CD4-positive, alpha-beta T cell (primary cell): ENCODE measurements at regions of chr1 and their contacts with region 1.

Region 1: DNA sequence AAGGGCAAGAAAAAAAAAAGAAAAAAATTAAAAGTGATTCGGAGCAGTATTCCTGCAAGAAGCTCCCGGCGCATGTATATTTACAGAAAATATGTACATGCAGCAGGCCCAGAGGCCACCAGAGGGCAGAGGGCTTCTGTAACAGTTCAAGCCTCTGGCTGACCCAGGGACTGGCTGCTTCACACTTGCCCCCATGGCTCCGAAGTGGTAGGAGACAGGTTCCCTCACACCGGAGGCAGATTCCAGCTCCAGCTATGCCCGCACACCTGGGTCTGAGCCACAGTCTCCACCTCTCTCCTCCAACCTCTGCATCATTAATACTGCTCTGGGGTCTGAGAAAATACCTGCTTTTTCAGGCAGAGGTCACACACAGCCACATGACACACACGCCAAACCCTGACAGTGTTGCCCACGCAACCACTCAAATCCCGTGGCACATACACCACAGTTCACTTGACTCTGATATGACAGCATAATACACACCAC is 2.2 kb upstream of the ARHGAP30 start:
- DNase-seq: peak in 13 of 14 experiments; percentile 29 to 78 (median 42)
- ATAC-seq: no peak
- H3K4me3 ChIP-seq: no peak overlapping the region
- H3K4me3 Mint-ChIP-seq: no peak overlapping the region
- H3K27ac ChIP-seq: no peak overlapping the region
- H3K27ac Mint-ChIP-seq: peak overlapping the region; percentile 90
- H3K4me1 ChIP-seq: peaks cover 45% of the 10 kb centered on the region
- H3K4me1 Mint-ChIP-seq: peaks cover 51% of the 10 kb centered on the region
- H3K27me3 ChIP-seq: no peaks in the 10 kb centered on the region
- H3K27me3 Mint-ChIP-seq: no peaks in the 10 kb centered on the region
- CTCF ChIP-seq: peak; percentile 59

Region 2: DNA sequence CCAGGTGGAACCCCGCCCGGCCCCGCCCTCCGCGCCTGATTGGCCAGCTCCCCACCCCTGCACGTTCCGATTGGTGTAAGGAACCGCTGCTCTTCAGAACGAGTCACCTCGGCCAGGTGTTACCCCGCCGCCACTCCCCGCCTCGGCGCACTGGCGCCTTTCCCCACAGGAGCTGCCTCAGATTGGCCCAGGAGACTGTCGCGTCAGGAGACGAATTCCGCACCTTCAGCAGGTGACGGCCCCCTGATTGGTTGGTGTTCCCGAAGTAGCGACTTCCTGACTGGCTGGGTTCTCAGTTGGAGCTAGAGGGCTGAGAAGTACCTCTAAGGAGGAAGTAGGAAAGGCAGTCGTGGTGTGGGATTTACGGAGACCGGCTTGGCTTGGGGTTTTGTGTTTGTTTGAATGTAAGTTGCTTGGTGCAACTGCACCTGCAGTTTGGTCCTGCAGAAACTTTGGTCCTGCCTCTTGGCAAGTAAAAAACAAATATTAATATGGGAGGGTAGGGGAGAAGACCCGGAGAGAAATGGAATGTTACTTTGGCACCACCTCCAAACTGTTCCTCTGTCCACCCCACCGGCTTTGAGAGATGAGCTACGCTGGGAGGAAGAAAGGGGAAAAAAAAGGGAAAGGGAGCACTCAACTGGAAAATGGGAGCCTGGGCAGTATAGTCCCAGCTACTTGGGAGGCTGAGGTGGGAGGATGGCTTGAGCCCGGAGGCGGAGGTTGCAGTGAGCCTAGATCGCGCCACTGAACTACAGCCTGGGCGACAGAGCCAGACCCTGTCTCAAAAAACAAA is 50.6 kb before region 1 on chr1:
- CTCF ChIA-PET with region 1: interaction called, 4 read pairs
- POLR2A ChIA-PET with region 1: interaction called, 31 read pairs
- intact Hi-C with region 1: no loop called
- DNase-seq: peak; percentile 79 to 96 (median 90)
- ATAC-seq: peak; percentile 95
- H3K4me3 ChIP-seq: peak overlapping the region; percentile 77
- H3K4me3 Mint-ChIP-seq: peak overlapping the region; percentile 91
- H3K27ac ChIP-seq: no peak overlapping the region
- H3K27ac Mint-ChIP-seq: peak overlapping the region; percentile 81
- H3K4me1 ChIP-seq: peaks cover 19% of the 10 kb centered on the region
- H3K4me1 Mint-ChIP-seq: peaks cover 25% of the 10 kb centered on the region
- H3K27me3 ChIP-seq: no peaks in the 10 kb centered on the region
- H3K27me3 Mint-ChIP-seq: no peaks in the 10 kb centered on the region
- CTCF ChIP-seq: no peak

Region 3: DNA sequence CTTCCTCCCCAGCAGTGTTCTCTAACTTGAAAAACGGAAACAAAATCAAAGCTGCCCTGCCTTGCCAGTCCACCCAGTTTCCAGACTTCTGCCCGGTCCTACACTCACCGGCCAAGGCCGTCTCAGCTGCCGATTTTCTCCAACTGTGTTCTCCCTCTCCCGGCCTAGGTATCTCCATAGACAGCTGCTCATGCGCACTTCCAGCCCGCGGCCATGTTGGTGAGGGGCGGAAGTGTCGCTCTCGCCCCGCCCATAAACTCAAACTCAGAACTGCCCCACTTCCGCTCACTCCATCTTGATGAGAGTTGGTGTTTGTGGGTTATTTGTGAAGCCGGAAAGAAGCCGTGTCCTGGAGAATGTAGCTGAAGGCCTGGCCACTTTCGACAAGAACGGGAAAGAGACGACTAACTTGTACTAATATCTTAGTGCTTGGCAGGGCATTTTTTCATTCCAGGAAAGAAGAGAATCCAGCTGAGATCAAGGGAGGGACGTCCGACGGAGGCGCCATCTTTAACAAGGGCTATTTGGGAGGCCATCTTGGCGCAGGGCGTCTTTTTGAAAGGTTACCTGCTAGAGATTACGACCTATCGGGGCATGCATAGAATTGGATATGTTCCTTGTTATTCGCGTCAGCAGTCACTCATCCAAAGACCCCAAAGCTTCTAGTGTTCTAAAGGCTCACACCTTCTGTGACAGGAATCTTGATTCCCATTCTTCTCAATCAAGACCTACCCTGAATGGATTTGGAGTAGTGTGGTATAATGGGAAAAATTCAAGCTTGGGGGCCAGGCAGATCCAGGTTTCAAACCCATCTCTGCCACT is 26.0 kb before region 1 on chr1 and contains the start of gene USF1:
- CTCF ChIA-PET with region 1: interaction called, 20 read pairs
- POLR2A ChIA-PET with region 1: interaction called, 295 read pairs
- intact Hi-C with region 1: loop called (anchors 1 kb)
- DNase-seq: peak; percentile 86 to 97 (median 92)
- ATAC-seq: peak; percentile 82
- H3K4me3 ChIP-seq: peak within 1 kb of the TSS; percentile 98
- H3K4me3 Mint-ChIP-seq: peak within 1 kb of the TSS; percentile 93
- H3K27ac ChIP-seq: peak within 1 kb of the TSS; percentile 90 to 96
- H3K27ac Mint-ChIP-seq: peak within 1 kb of the TSS; percentile 94
- H3K4me1 ChIP-seq: peaks cover 52% of the 10 kb centered on the region
- H3K4me1 Mint-ChIP-seq: peaks cover 43% of the 10 kb centered on the region
- H3K27me3 ChIP-seq: no peaks in the 10 kb centered on the region
- H3K27me3 Mint-ChIP-seq: no peaks in the 10 kb centered on the region
- CTCF ChIP-seq: no peak
- total RNA-seq, gene USF1: 93.5 to 99.1 TPM

Region 4: GRCh38 chr1:161091756-161092517 is 20.0 kb after region 1 on chr1:
- CTCF ChIA-PET with region 1: interaction called, 36 read pairs
- POLR2A ChIA-PET with region 1: interaction called, 79 read pairs
- intact Hi-C with region 1: loop called (anchors 1 to 2 kb)
- DNase-seq: no peak
- ATAC-seq: no peak
- H3K4me3 ChIP-seq: no peak overlapping the region
- H3K4me3 Mint-ChIP-seq: no peak overlapping the region
- H3K27ac ChIP-seq: no peak overlapping the region
- H3K27ac Mint-ChIP-seq: no peak overlapping the region
- H3K4me1 ChIP-seq: peaks cover 2% of the 10 kb centered on the region
- H3K4me1 Mint-ChIP-seq: peaks cover 12% of the 10 kb centered on the region
- H3K27me3 ChIP-seq: no peaks in the 10 kb centered on the region
- H3K27me3 Mint-ChIP-seq: no peaks in the 10 kb centered on the region
- CTCF ChIP-seq: no peak

Region 5: GRCh38 chr1:161117759-161118581 is 46.0 kb after region 1 on chr1 and contains the starts of genes NIT1 and PFDN2:
- CTCF ChIA-PET with region 1: interaction called, 3 read pairs
- POLR2A ChIA-PET with region 1: interaction called, 26 read pairs
- intact Hi-C with region 1: no loop called
- DNase-seq: peak; percentile 65 to 93 (median 78)
- ATAC-seq: peak; percentile 71
- H3K4me3 ChIP-seq: peak within 1 kb of the TSS; percentile 91
- H3K4me3 Mint-ChIP-seq: peak within 1 kb of the TSS; percentile 97
- H3K27ac ChIP-seq: peak within 1 kb of the TSS; percentile 81 to 91
- H3K27ac Mint-ChIP-seq: peak within 1 kb of the TSS; percentile 91
- H3K4me1 ChIP-seq: peaks cover 53% of the 10 kb centered on the region
- H3K4me1 Mint-ChIP-seq: peaks cover 67% of the 10 kb centered on the region
- H3K27me3 ChIP-seq: no peaks in the 10 kb centered on the region
- H3K27me3 Mint-ChIP-seq: no peaks in the 10 kb centered on the region
- CTCF ChIP-seq: no peak
- total RNA-seq, gene NIT1: 15.9 to 18.0 TPM
- total RNA-seq, gene PFDN2: 46.2 to 57.7 TPM

Region 6: GRCh38 chr1:161153679-161154426 is 81.9 kb after region 1 on chr1 and contains the start of gene UFC1:
- CTCF ChIA-PET with region 1: interaction called, 4 read pairs
- POLR2A ChIA-PET with region 1: interaction called, 14 read pairs
- intact Hi-C with region 1: loop called in 1 of 2 experiments (anchors 5 kb)
- DNase-seq: peak; percentile 67 to 96 (median 76)
- ATAC-seq: peak; percentile 91
- H3K4me3 ChIP-seq: peak within 1 kb of the TSS; percentile 97
- H3K4me3 Mint-ChIP-seq: peak within 1 kb of the TSS; percentile 98
- H3K27ac ChIP-seq: peak within 1 kb of the TSS; percentile 96 to 99
- H3K27ac Mint-ChIP-seq: peak within 1 kb of the TSS; percentile 99
- H3K4me1 ChIP-seq: peaks cover 19% of the 10 kb centered on the region
- H3K4me1 Mint-ChIP-seq: peaks cover 42% of the 10 kb centered on the region
- H3K27me3 ChIP-seq: no peaks in the 10 kb centered on the region
- H3K27me3 Mint-ChIP-seq: no peaks in the 10 kb centered on the region
- CTCF ChIP-seq: no peak
- total RNA-seq, gene UFC1: 96.6 to 97.8 TPM

Region 7: GRCh38 chr1:161165742-161166668 is 94.1 kb after region 1 on chr1 and contains the start of gene PPOX:
- CTCF ChIA-PET with region 1: no interaction called
- POLR2A ChIA-PET with region 1: interaction called, 20 read pairs
- intact Hi-C with region 1: no loop called
- DNase-seq: peak; percentile 85 to 97 (median 88)
- ATAC-seq: peak; percentile 90
- H3K4me3 ChIP-seq: peak within 1 kb of the TSS; percentile 95
- H3K4me3 Mint-ChIP-seq: peak within 1 kb of the TSS; percentile 93
- H3K27ac ChIP-seq: peak within 1 kb of the TSS; percentile 85 to 86
- H3K27ac Mint-ChIP-seq: peak within 1 kb of the TSS; percentile 98
- H3K4me1 ChIP-seq: peaks cover 43% of the 10 kb centered on the region
- H3K4me1 Mint-ChIP-seq: peaks cover 66% of the 10 kb centered on the region
- H3K27me3 ChIP-seq: no peaks in the 10 kb centered on the region
- H3K27me3 Mint-ChIP-seq: no peaks in the 10 kb centered on the region
- CTCF ChIP-seq: peak; percentile 61
- total RNA-seq, gene PPOX: 28.6 to 31.5 TPM